ENCODE measurements at regions of chr20 and their contacts with region 1.

Region 1: DNA sequence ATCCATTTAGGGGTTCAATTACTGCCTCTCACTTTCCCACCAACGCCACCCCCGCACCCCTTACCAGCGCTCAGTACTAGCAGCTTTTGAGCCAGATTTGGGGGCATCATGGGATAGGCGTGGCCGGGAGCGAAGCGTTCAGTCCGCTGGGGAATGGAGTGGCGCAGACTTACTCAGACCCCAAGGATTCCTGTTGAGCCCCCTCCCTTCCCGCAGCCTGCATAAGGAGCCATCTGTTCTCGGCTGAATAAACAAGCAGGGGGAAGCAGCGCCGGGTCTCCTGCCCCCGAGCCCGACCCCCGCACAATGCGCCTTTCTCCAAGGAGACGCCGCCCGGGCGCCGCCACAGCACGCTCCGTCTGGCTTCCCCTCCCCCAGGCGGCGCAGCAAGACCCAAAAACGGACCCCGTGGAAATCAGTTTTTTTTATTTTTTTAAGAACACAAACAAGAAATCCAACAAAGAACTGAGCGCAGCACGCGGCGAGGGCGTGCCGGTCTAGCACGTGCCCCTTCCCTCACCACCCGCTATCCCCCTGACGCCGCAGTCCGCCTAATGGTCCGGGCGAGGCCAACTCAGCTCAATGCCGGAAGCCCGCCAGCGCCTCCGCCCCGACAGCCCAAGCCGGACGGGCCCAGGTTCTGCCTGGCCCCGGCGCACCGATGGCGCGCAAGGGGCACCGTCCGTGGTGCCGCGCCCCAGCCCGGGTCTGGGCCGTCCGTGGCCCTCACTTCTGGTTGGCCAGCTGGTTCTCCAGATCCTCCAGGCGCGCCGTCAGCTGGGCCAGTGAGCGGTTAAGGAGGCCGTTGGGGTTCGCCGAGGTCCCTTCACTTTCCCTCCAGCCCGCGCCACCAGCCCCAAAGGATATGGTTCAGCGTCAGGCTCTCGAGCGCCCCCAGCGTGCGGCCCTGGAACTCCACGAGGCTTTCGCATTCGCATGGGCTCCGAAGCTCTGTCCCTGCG is 13.3 kb upstream of the RBPJL start:
- DNase-seq: peak; percentile 82 to 95
- ATAC-seq: peak; percentile 78 to 91
- H3K4me3 ChIP-seq: peak overlapping the region; percentile 55
- H3K27ac ChIP-seq: peak overlapping the region; percentile 77 to 92
- H3K4me1 ChIP-seq: no peaks in the 10 kb centered on the region
- CTCF ChIP-seq: peak; percentile 76
- EP300 ChIP-seq: no peak
- POLR2A ChIP-seq: no peak
- RAD21 ChIP-seq: peak in 1 of 2 experiments; percentile 38; a peak in 2 of 5 replicates

Region 2: GRCh38 chr20:45020236-45020886 is 273.0 kb before region 1 on chr20:
- CTCF ChIA-PET with region 1: interaction called, 99 read pairs
- POLR2A ChIA-PET with region 1: no interaction called
- DNase-seq: no peak
- ATAC-seq: no peak
- H3K4me3 ChIP-seq: no peak overlapping the region
- H3K27ac ChIP-seq: no peak overlapping the region
- H3K4me1 ChIP-seq: no peaks in the 10 kb centered on the region
- CTCF ChIP-seq: no peak
- EP300 ChIP-seq: no peak
- POLR2A ChIP-seq: no peak
- RAD21 ChIP-seq: no peak

Region 3: GRCh38 chr20:45052698-45053429 is 240.5 kb before region 1 on chr20:
- CTCF ChIA-PET with region 1: interaction called, 20 read pairs
- POLR2A ChIA-PET with region 1: no interaction called
- DNase-seq: no peak
- ATAC-seq: no peak
- H3K4me3 ChIP-seq: no peak overlapping the region
- H3K27ac ChIP-seq: no peak overlapping the region
- H3K4me1 ChIP-seq: 0 out of 3 replicates have a peak, but pooled peaks cover 5% of the 10 kb centered on the region
- CTCF ChIP-seq: no peak
- EP300 ChIP-seq: no peak
- POLR2A ChIP-seq: no peak
- RAD21 ChIP-seq: no peak

Region 4: GRCh38 chr20:45104786-45105185 is 188.5 kb before region 1 on chr20:
- CTCF ChIA-PET with region 1: interaction called, 21 read pairs
- POLR2A ChIA-PET with region 1: no interaction called
- DNase-seq: no peak
- ATAC-seq: no peak
- H3K4me3 ChIP-seq: no peak overlapping the region
- H3K27ac ChIP-seq: no peak overlapping the region
- H3K4me1 ChIP-seq: no peaks in the 10 kb centered on the region
- CTCF ChIP-seq: no peak
- EP300 ChIP-seq: no peak
- POLR2A ChIP-seq: no peak
- RAD21 ChIP-seq: no peak

Region 5: DNA sequence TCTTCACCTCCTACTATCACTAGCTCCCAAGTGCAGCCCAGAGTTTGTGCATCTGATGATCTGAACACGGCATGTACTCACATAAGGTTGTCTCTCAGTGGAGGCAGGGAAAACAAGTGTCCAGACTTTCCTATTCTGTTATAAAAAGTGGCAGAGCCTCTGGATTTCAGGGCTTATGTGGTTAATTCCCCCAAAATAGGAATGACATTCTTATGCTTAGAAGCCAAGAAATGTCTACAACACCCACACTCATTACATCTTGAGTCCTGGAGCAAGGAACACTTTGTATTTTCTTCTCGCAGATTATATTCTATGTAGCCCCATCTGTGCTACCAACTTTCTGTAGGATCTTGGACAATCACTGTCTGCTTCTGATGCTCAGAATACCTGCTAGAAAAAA is 100.0 kb before region 1 on chr20:
- CTCF ChIA-PET with region 1: interaction called, 10 read pairs
- POLR2A ChIA-PET with region 1: no interaction called
- DNase-seq: no peak
- ATAC-seq: no peak
- H3K4me3 ChIP-seq: no peak overlapping the region
- H3K27ac ChIP-seq: no peak overlapping the region
- H3K4me1 ChIP-seq: no peaks in the 10 kb centered on the region
- CTCF ChIP-seq: no peak
- EP300 ChIP-seq: no peak
- POLR2A ChIP-seq: no peak
- RAD21 ChIP-seq: no peak

Region 6: DNA sequence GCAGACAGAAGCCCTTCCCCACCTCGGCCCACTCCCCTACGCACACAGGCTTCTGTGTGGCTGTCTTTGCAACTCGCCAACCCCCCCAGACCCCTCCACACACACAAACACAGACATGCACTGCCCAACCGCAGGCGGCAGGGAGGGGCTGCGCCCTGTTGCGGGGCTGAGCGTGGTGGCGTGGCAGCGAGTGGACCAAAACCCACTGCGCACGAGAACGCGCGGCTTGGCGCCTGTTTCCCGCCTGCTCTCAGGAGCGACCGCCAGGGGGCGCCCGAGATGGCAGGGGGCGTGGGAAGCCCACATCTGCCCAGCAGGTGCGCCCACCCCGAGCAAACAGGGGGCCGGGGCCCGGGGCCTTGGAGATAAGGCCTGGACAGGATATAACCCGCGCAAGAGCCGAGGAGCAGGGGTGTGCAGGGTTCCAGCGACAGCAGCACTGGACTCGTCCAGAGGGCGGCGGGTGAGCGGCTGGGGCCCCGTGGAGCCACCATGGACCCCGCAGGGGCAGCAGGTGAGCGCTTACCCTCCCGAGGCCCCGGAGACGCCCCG is 13.2 kb after region 1 on chr20 and contains the start of gene RBPJL:
- CTCF ChIA-PET with region 1: interaction called, 77 read pairs
- POLR2A ChIA-PET with region 1: interaction called, 4 read pairs
- DNase-seq: no peak
- ATAC-seq: peak in 1 of 2 experiments; percentile 79; a peak in 3 of 6 replicates
- H3K4me3 ChIP-seq: no peak within 1 kb of the TSS
- H3K27ac ChIP-seq: no peak within 1 kb of the TSS
- H3K4me1 ChIP-seq: no peaks in the 10 kb centered on the region
- CTCF ChIP-seq: peak; percentile 79
- EP300 ChIP-seq: no peak
- POLR2A ChIP-seq: no peak
- RAD21 ChIP-seq: peak in 1 of 2 experiments; percentile 42; a peak in 3 of 5 replicates
- polyA plus RNA-seq, gene RBPJL: not detected in 2 replicates

Region 7: GRCh38 chr20:45337367-45338120 is 44.2 kb after region 1 on chr20:
- CTCF ChIA-PET with region 1: interaction called, 14 read pairs
- POLR2A ChIA-PET with region 1: no interaction called
- DNase-seq: peak in 1 of 2 experiments; percentile 59
- ATAC-seq: peak; percentile 41 to 63
- H3K4me3 ChIP-seq: peak overlapping the region; percentile 0; the same call in 1 of the 3 replicates
- H3K27ac ChIP-seq: peak overlapping the region; percentile 84 to 96
- H3K4me1 ChIP-seq: peaks cover 75% of the 10 kb centered on the region
- CTCF ChIP-seq: no peak
- EP300 ChIP-seq: 0 out of 5 replicates have a peak, but pooled peaks of 1 of the 2 experiments have one; percentile 21
- POLR2A ChIP-seq: no peak
- RAD21 ChIP-seq: no peak

Region 8: GRCh38 chr20:45347936-45348778 is 54.8 kb after region 1 on chr20 and contains the start of gene SDC4:
- CTCF ChIA-PET with region 1: no interaction called
- POLR2A ChIA-PET with region 1: no interaction called
- DNase-seq: peak; percentile 51 to 74
- ATAC-seq: peak; percentile 72 to 81
- H3K4me3 ChIP-seq: peak within 1 kb of the TSS; percentile 86
- H3K27ac ChIP-seq: peak within 1 kb of the TSS; percentile 92 to 96
- H3K4me1 ChIP-seq: peaks cover 52% of the 10 kb centered on the region
- CTCF ChIP-seq: no peak
- EP300 ChIP-seq: no peak
- POLR2A ChIP-seq: peak; percentile 99
- RAD21 ChIP-seq: no peak
- polyA plus RNA-seq, gene SDC4: 27.4 and 29.0 TPM in 2 replicates

Measured in A549 (cell line).